PC-9 (cell line): ENCODE measurements at regions of chr17 and their contacts with region 1.

Region 1: DNA sequence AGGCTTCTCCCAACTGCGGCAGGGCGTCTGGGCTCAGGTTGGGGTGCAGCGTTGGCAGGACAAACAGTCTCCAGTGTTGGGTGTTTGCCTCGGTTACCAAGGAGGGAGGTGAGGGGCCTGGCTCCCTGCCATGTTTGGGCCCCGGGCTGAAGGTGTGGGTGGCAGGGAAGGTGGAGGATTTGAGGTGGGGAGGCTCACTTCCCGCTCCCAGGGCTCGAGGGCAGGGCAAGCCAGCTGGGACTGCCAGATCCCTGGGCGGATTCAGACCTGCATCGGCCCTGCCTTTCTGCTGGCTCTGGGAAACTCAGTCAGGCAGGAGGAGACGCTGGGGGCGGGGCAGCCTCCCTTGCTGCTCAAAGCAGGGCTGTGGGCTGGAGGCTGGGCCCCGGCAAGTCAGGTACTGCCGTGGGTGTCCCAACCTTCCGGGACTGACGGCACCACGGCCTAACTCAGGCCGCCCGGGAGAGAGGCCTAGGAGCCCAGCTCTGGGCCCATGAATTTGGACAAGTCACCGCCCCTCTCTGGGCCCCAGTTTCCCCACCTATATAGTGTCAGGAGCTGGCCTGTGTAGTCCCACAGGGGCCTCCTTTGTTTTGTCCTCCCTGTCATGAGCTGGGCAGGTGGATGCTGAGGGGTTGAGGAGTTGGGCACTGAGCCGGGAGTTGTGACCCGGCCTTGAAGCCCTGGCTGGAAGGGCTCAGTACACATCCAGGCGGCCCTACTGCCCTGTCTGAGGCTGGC is 31.4 kb upstream of the KRT17 start:
- DNase-seq: peak; percentile 96 to 97
- H3K4me3 ChIP-seq: peak overlapping the region; percentile 31; the same call in 1 of the 2 replicates
- H3K27ac ChIP-seq: peak overlapping the region; percentile 98
- H3K4me1 ChIP-seq: peaks cover 69% of the 10 kb centered on the region
- H3K27me3 ChIP-seq: no peaks in the 10 kb centered on the region
- CTCF ChIP-seq: no peak

Region 2: GRCh38 chr17:40915199-40915661 is 740.6 kb before region 1 on chr17:
- CTCF ChIA-PET with region 1: no interaction called
- POLR2A ChIA-PET with region 1: no interaction called
- intact Hi-C with region 1: loop called (anchors 1 kb)
- DNase-seq: peak in 1 of 2 experiments; percentile 99
- H3K4me3 ChIP-seq: no peak overlapping the region
- H3K27ac ChIP-seq: peak overlapping the region; percentile 99
- H3K4me1 ChIP-seq: peaks cover 74% of the 10 kb centered on the region
- H3K27me3 ChIP-seq: no peaks in the 10 kb centered on the region
- CTCF ChIP-seq: no peak

Region 3: GRCh38 chr17:41505809-41506731 is 149.7 kb before region 1 on chr17:
- CTCF ChIA-PET with region 1: no interaction called
- POLR2A ChIA-PET with region 1: interaction called, 8 read pairs
- intact Hi-C with region 1: loop called (anchors 2 kb)
- DNase-seq: peak in 1 of 2 experiments; percentile 59
- H3K4me3 ChIP-seq: peak overlapping the region; percentile 58; the same call in 1 of the 2 replicates
- H3K27ac ChIP-seq: peak overlapping the region; percentile 94
- H3K4me1 ChIP-seq: peaks cover 84% of the 10 kb centered on the region
- H3K27me3 ChIP-seq: no peaks in the 10 kb centered on the region
- CTCF ChIP-seq: no peak

Region 4: DNA sequence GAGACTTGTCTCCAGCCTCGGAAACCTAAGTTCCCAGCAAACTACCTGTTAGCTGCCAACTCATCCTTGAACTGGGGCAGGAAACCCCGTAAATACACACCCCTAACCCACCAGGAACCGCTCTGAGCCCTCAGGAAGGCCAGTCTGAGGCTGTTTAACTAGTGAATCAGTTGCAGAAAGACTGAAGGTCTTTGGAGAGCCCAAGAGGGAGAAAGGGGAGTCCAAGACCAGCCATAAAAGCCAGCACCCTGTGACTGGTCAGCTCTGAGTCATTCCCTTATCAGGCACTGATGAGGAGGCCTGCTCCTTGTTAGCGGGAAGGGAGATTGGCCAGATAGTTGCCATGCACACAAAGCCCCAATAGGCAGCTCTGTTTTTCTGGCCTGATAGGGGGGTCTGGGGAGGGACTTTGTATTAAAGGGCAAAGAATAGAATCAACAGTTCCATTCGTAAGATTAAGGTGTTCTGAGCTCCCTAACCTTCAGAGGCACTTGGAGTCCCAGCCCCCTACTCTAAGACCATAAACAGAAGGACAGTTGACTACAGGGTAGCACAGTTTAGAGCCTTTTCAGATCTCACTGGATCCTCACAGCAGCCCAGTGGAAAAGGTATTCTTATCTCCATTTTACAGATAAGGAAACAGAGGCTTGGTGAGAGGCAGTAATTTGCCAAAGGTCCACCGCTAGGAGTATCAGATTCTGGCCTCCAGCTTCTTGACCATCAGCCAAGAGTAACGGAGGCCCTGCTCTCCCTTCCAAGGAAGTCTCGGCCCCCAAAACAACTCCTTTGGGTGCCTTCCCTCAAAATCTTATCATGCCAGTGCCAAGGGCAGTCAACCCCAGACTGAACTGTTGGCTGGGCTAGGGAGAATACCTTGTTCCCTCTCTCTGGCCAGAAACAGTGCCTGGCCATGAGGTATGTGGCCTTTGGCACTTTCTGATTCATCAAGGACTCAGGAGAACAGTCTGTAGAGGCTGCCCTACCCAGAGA is 125.4 kb before region 1 on chr17:
- CTCF ChIA-PET with region 1: no interaction called
- POLR2A ChIA-PET with region 1: interaction called, 15 read pairs
- intact Hi-C with region 1: loop called (anchors 2 kb)
- DNase-seq: peak; percentile 86 to 99
- H3K4me3 ChIP-seq: peak overlapping the region; percentile 93
- H3K27ac ChIP-seq: peak overlapping the region; percentile 95
- H3K4me1 ChIP-seq: peaks cover 66% of the 10 kb centered on the region
- H3K27me3 ChIP-seq: no peaks in the 10 kb centered on the region
- CTCF ChIP-seq: no peak

Region 5: DNA sequence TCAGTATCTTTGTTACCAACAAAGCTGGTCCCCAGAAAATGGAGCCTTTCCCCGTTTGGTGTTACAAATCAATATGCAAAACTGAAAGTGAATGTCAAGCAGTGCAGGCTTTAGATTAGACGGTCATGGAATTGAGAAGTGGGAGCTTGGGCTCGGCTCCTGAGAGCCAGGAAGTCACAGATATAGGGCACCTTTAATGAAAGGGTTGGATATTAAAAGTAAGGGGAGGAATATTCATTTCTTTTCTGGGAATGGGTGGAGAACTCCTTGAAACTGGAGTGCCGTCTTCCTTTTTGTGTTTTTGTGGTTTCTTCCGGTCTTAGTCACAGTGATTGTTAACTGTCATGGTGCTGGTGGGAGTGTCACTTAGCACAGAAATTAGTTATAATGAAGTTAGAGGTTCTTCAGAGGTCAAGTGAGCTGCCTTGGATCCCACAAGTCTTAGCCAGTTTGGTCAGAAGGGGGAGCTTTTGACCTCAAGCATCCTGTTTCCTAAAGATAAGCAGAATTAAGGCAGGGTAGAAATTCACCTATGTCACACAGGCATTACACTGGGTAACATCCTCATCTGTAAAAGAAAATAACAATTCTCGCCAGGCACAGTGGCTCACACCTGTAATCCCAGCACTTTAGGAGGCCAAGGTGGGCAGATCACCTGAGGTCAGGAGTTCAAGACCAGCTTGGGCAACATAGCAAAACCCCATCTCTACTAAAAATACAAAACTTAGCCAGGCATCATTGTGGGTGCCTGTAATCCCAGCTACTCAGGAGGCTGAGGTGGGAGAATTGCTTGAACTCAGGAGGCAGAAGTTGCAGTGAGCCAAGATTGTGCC is 23.3 kb after region 1 on chr17:
- CTCF ChIA-PET with region 1: no interaction called
- POLR2A ChIA-PET with region 1: interaction called, 4 read pairs
- intact Hi-C with region 1: loop called (anchors 2 kb)
- DNase-seq: peak; percentile 67 to 88
- H3K4me3 ChIP-seq: peak overlapping the region; percentile 50
- H3K27ac ChIP-seq: peak overlapping the region; percentile 94
- H3K4me1 ChIP-seq: peaks cover 24% of the 10 kb centered on the region
- H3K27me3 ChIP-seq: no peaks in the 10 kb centered on the region
- CTCF ChIP-seq: peak; percentile 28; the same call in 1 of the 2 replicates

Region 6: GRCh38 chr17:41750862-41751261 is 95.1 kb after region 1 on chr17:
- CTCF ChIA-PET with region 1: no interaction called
- POLR2A ChIA-PET with region 1: no interaction called
- intact Hi-C with region 1: no loop called
- DNase-seq: no peak
- H3K4me3 ChIP-seq: no peak overlapping the region
- H3K27ac ChIP-seq: no peak overlapping the region
- H3K4me1 ChIP-seq: no peaks in the 10 kb centered on the region
- H3K27me3 ChIP-seq: no peaks in the 10 kb centered on the region
- CTCF ChIP-seq: no peak